Naive thymus-derived CD4-positive, alpha-beta T cell (primary cell): ENCODE measurements at regions of chr5 and their contacts with region 1.

Region 1: GRCh38 chr5:14399054-14399692 is 182.4 kb upstream of the OTULINL start:
- DNase-seq: peak in 6 of 9 donors; percentile 26 to 67 (median 53)
- ATAC-seq: peak; percentile 72
- H3K4me3 ChIP-seq: no peak overlapping the region
- H3K4me3 Mint-ChIP-seq: no peak overlapping the region
- H3K27ac ChIP-seq: no peak overlapping the region
- H3K27ac Mint-ChIP-seq: peak overlapping the region in 1 of 9 donors; percentile 7
- H3K4me1 ChIP-seq: no peaks in the 10 kb centered on the region
- H3K4me1 Mint-ChIP-seq: peaks cover 0 to 47% (median 19%) of the 10 kb centered on the region in 7 donors
- H3K27me3 ChIP-seq: no peaks in the 10 kb centered on the region
- H3K27me3 Mint-ChIP-seq: peaks cover 0 to 2% (median 0%) of the 10 kb centered on the region in 5 donors

Region 2: DNA sequence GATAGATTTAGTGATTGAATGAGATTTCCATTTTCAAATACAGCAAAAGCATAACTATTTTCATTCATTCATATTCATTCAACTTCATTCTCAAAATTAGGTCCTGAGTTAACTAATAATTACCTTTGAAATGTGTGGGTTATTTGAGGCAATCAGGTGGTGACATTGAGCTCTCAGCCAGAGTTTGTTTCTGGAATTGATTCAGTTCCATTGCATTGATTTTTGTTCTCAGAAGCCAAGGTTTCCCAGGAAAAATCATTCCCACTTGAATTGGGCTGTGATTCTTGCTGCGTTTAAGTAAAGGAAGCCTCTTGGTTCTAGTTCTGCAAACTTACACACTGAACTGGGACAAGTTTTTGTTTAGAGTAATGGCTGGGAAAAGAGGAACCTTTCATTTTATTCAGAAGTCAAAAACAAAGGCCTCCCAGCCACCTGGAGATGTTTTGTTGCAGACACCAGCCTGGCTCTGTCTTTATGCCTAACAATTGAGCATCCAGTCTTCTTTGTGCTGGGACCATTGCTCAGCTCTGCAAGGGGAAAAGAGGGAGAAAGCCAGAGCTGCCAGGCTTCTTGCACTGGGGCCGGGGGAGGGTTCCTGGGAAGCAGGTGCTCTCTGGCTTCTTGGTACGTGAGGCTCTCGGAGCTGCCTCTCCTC is 57.5 kb before region 1 on chr5:
- CTCF ChIA-PET with region 1: no interaction called
- POLR2A ChIA-PET with region 1: no interaction called
- intact Hi-C with region 1: no loop called
- DNase-seq: no peak
- ATAC-seq: no peak
- H3K4me3 ChIP-seq: no peak overlapping the region
- H3K4me3 Mint-ChIP-seq: no peak overlapping the region
- H3K27ac ChIP-seq: no peak overlapping the region
- H3K27ac Mint-ChIP-seq: no peak overlapping the region
- H3K4me1 ChIP-seq: no peaks in the 10 kb centered on the region
- H3K4me1 Mint-ChIP-seq: peaks cover 0 to 6% (median 0%) of the 10 kb centered on the region in 7 donors
- H3K27me3 ChIP-seq: no peaks in the 10 kb centered on the region
- H3K27me3 Mint-ChIP-seq: peaks cover 0 to 17% (median 0%) of the 10 kb centered on the region in 5 donors

Region 3: DNA sequence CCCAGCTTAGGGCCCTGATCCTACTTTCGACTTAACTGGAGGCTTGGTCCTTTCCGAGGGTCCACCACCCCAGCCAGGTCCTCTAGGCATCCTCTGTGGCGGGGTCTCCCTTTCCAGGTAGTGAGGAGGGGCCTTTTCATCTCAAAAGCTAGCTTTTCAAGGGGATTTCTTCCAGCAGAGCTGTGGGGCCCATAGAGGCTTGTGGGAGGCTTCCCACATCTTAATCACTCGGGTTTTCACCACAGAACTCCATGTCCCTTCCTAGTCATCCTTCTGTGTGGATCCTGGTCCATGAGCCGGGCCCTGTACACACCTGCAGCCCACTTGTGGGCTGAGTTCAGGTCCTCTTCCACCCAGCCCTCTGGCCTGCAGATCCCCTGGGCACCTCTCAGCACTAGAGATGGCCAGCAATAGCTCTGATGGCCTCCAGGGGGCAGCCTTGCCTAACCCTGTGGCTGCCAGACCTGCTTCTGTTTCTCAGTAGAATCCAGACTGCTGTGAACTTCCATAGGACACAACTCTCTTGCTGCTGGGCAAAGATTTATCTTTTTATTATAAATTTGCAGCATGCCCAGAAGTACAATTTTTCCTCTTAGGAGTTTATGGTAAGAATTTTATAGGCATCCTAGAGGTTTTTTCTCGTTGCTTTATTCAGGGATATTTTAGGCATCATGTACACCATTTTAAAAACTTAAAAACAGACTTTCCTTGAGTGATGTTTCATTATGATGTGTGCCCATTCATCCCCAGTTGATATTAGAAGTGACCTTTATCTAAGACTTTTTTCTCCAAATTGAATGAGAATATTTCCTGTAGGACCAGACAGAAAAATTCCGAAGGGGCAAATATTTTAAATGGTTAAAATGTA is 47.1 kb before region 1 on chr5:
- CTCF ChIA-PET with region 1: no interaction called
- POLR2A ChIA-PET with region 1: no interaction called
- intact Hi-C with region 1: loop called in 1 of 2 experiments (anchors 1 kb)
- DNase-seq: peak; percentile 22 to 64 (median 50)
- ATAC-seq: peak; percentile 94
- H3K4me3 ChIP-seq: no peak overlapping the region
- H3K4me3 Mint-ChIP-seq: no peak overlapping the region
- H3K27ac ChIP-seq: no peak overlapping the region
- H3K27ac Mint-ChIP-seq: no peak overlapping the region
- H3K4me1 ChIP-seq: no peaks in the 10 kb centered on the region
- H3K4me1 Mint-ChIP-seq: peaks cover 0 to 4% (median 0%) of the 10 kb centered on the region in 7 donors
- H3K27me3 ChIP-seq: no peaks in the 10 kb centered on the region
- H3K27me3 Mint-ChIP-seq: peaks cover 0 to 8% (median 0%) of the 10 kb centered on the region in 5 donors

Region 4: DNA sequence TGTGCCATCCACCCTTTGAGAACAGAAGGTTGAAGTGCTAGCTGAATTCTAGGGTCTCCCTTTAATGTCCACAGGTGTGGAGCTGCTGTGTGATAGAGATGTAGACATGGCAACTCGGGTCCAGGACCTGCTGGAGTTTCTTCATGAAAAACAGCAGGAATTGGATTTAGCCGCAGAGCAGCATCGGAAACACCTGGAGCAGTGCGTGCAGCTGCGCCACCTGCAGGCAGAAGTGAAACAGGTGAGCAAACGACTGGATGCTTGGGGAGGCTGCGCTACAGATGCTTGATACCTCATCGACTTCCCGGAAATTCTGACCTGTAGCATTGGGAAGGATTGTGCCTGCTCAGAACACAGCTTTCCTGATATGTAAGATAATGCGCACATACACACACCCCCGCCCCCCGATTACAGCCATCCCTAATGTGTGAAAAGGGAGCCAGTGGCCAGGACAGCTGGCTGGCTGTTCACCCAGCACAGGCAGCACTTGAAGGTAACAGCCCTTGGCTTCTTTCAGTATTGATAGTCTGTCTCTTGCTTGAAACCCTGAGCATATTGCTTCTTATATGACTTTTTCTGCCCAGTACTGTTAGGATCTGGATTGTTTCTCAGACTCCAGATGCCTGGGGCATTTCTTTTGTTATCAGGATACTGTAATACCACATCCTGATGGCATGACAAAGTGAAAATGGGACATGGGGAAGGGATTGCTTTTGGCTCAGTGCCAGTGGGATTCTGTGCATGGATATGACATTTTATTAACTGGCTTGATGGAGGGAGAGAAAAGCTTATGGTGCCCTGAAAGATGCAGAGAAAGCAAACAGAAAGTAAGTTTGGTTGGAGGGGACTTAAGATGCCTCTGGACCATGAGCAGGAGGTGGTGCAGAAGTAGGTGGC is 34.3 kb before region 1 on chr5:
- CTCF ChIA-PET with region 1: interaction called, 4 read pairs
- POLR2A ChIA-PET with region 1: no interaction called
- intact Hi-C with region 1: loop called (anchors 1 kb)
- DNase-seq: no peak
- ATAC-seq: no peak
- H3K4me3 ChIP-seq: no peak overlapping the region
- H3K4me3 Mint-ChIP-seq: peak overlapping the region in 1 of 10 donors; percentile 48
- H3K27ac ChIP-seq: no peak overlapping the region
- H3K27ac Mint-ChIP-seq: peak overlapping the region in 4 of 9 donors; percentile 13 to 73 (median 46)
- H3K4me1 ChIP-seq: peaks cover 9 to 12% of the 10 kb centered on the region in 2 donors
- H3K4me1 Mint-ChIP-seq: peaks cover 17 to 55% (median 28%) of the 10 kb centered on the region in 7 donors
- H3K27me3 ChIP-seq: no peaks in the 10 kb centered on the region
- H3K27me3 Mint-ChIP-seq: no peaks in the 10 kb centered on the region

Region 5: GRCh38 chr5:14415024-14415697 is 16.0 kb after region 1 on chr5:
- CTCF ChIA-PET with region 1: interaction called, 6 read pairs
- POLR2A ChIA-PET with region 1: no interaction called
- intact Hi-C with region 1: loop called in 1 of 2 experiments (anchors 1 kb)
- DNase-seq: no peak
- ATAC-seq: no peak
- H3K4me3 ChIP-seq: peak overlapping the region; percentile 17
- H3K4me3 Mint-ChIP-seq: peak overlapping the region in 7 of 10 donors; percentile 57 to 87 (median 73)
- H3K27ac ChIP-seq: no peak overlapping the region
- H3K27ac Mint-ChIP-seq: peak overlapping the region; percentile 89 to 97 (median 94)
- H3K4me1 ChIP-seq: peaks cover 31 to 32% of the 10 kb centered on the region in 2 donors
- H3K4me1 Mint-ChIP-seq: peaks cover 26 to 52% (median 40%) of the 10 kb centered on the region in 7 donors
- H3K27me3 ChIP-seq: no peaks in the 10 kb centered on the region
- H3K27me3 Mint-ChIP-seq: no peaks in the 10 kb centered on the region

Region 6: DNA sequence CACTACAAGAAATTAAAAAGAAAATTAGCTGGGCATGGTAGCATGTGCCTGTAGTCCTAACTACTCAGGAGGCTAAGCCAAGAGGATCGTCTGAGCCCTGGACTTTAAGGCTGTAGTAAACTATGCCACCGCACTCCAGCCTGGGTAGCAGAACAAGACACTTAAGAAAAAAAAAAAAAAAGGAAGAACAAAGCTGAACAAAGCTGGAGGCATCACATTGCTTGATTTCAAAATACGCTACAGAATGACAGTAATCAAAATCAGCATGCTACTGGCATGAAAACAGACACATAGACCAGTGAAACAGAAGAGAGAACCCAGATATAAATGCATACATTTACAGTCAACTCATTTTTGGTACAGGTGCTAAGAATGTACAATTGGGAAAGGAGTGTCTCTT is 250.9 kb after region 1 on chr5:
- CTCF ChIA-PET with region 1: interaction called, 86 read pairs
- POLR2A ChIA-PET with region 1: no interaction called
- intact Hi-C with region 1: loop called (anchors 1 kb)
- DNase-seq: no peak
- ATAC-seq: no peak
- H3K4me3 ChIP-seq: no peak overlapping the region
- H3K4me3 Mint-ChIP-seq: no peak overlapping the region
- H3K27ac ChIP-seq: no peak overlapping the region
- H3K27ac Mint-ChIP-seq: no peak overlapping the region
- H3K4me1 ChIP-seq: no peaks in the 10 kb centered on the region
- H3K4me1 Mint-ChIP-seq: peaks cover 0 to 17% (median 2%) of the 10 kb centered on the region in 7 donors
- H3K27me3 ChIP-seq: no peaks in the 10 kb centered on the region
- H3K27me3 Mint-ChIP-seq: peaks cover 10 to 40% (median 19%) of the 10 kb centered on the region in 5 donors

Region 7: DNA sequence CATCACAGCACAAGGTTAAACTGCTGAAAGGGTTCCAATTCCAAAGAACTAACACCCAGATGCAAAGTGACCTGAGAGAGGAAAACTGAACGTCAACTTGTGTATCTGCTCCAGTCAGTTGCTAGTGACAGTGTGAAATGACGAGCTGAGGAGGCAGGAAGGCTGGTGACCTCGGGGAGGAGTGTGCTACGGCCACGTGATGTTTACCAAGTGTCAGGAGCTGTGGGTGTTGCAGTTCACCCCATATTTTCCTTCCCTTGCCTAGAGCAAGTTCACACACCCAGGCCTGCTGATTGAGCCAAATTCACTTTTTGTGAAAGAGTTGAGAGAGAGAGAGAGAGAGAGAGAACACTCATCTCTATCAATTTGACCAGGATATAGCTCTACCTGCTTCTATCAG is 704.0 kb after region 1 on chr5:
- CTCF ChIA-PET with region 1: no interaction called
- POLR2A ChIA-PET with region 1: no interaction called
- intact Hi-C with region 1: no loop called
- DNase-seq: peak in 3 of 9 donors; percentile 2 to 10 (median 2)
- ATAC-seq: peak; percentile 74
- H3K4me3 ChIP-seq: no peak overlapping the region
- H3K4me3 Mint-ChIP-seq: peak overlapping the region in 1 of 10 donors; percentile 13
- H3K27ac ChIP-seq: no peak overlapping the region
- H3K27ac Mint-ChIP-seq: peak overlapping the region in 2 of 9 donors; percentile 24 to 56
- H3K4me1 ChIP-seq: no peaks in the 10 kb centered on the region
- H3K4me1 Mint-ChIP-seq: peaks cover 0 to 6% (median 2%) of the 10 kb centered on the region in 7 donors
- H3K27me3 ChIP-seq: no peaks in the 10 kb centered on the region
- H3K27me3 Mint-ChIP-seq: peaks cover 0 to 4% (median 0%) of the 10 kb centered on the region in 5 donors